ENCODE measurements at regions of chr2 and their contacts with region 1.

Region 1: DNA sequence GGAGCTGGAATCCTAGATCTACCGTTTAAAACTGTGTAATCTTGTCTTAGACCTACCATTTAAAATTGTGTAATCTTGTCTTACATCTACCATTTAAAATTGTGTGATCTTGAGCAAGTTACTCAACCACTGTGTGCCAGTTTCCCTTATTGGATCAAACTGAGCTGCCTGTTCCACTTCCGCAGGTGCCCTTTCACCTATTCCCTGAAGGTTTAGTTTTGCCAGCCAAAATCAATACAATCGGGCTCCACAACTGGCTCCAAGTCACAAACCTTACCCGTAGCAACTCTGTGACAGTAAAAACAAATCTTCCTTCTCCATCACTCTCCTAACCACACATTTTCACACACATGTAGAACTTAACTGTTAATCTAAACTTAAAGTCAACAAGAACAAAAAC is 20.1 kb downstream of the DOCK10 start:
- DNase-seq: no peak
- H3K4me3 Mint-ChIP-seq: no peak overlapping the region
- H3K27ac Mint-ChIP-seq: no peak overlapping the region
- H3K4me1 Mint-ChIP-seq: peaks cover 18% of the 10 kb centered on the region
- H3K27me3 Mint-ChIP-seq: no peaks in the 10 kb centered on the region
- CTCF ChIP-seq: no peak

Region 2: GRCh38 chr2:225041851-225042799 is 19.9 kb after region 1 on chr2 and contains the start of gene DOCK10:
- CTCF ChIA-PET with region 1: interaction called, 12 read pairs
- POLR2A ChIA-PET with region 1: interaction called, 4 read pairs
- intact Hi-C with region 1: no loop called
- DNase-seq: peak; percentile 17
- H3K4me3 Mint-ChIP-seq: peak within 1 kb of the TSS; percentile 65
- H3K27ac Mint-ChIP-seq: no peak within 1 kb of the TSS
- H3K4me1 Mint-ChIP-seq: peaks cover 6% of the 10 kb centered on the region
- H3K27me3 Mint-ChIP-seq: peaks cover 59% of the 10 kb centered on the region
- CTCF ChIP-seq: no peak
- total RNA-seq, gene DOCK10: 0.96 and 1.6 TPM in 2 replicates

Region 3: DNA sequence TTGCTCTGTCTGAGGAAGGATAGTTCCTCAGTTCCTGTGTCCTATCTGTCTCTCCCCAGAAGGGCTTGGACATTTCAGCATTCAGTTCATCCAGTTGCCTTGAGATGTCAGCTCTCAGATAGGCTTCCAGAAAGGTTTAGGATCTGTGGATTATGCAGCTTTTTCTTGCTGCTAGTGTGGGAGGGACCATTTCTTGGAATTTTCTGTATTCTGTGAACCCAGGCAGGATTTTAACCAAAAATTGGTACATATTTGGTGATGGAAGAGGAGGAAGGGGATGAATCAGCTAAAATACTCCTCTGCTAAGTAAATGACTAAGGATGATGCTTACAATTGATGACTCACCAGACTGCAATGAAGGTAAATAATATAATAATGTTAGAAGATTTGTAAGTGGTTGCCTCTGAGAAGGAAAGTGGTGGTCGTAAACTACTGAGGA is 78.7 kb after region 1 on chr2:
- CTCF ChIA-PET with region 1: no interaction called
- POLR2A ChIA-PET with region 1: no interaction called
- intact Hi-C with region 1: no loop called
- DNase-seq: peak; percentile 73
- H3K4me3 Mint-ChIP-seq: no peak overlapping the region
- H3K27ac Mint-ChIP-seq: no peak overlapping the region
- H3K4me1 Mint-ChIP-seq: peaks cover 8% of the 10 kb centered on the region
- H3K27me3 Mint-ChIP-seq: no peaks in the 10 kb centered on the region
- CTCF ChIP-seq: no peak

Measured in MCF 10A (cell line).